ENCODE measurements at regions of chr10 and their contacts with region 1.

Region 1: DNA sequence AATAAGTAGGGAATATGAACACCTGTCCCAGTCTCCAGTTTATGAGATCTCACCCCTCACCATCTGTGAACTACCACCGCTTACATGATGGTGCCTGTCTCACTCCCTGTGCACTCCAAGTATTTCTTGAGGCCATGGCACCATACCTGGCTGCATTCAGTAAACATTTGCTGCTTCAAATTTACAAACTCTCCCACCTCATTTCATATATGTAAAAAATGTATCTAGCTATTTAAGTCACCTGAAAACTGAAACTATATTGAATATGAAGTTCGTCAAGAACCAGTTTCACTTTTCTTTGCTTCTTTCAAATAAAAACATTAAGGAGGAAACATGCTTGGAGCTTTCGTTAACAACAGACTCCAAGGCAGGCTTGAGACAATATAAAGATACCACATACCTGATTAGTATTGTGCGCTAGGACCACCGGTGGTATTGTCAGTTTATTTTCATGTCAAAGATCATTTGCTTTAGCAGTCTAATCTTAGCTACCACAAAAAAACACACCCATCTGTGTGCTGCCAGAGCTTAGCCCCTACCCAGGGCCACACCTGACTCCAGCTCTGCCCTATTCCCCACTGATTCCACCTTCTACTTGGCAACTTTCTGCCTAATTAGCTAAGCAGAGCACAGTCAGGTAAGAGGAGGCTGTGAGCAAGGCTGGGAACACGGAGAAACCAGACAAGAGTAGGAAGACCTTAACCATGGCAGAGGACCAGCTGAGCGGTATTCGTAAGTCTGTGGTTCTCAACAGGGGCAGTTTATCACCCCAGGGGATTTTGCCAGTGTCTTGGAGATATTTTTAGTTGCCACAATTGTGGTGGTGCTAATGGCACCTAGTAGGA is 92.0 kb downstream of the ZFAND4 start:
- DNase-seq: peak; percentile 23
- H3K4me3 ChIP-seq: peak overlapping the region; percentile 68
- H3K27ac ChIP-seq: peak overlapping the region; percentile 68
- H3K4me1 ChIP-seq: peaks cover 22% of the 10 kb centered on the region
- CTCF ChIP-seq: no peak

Region 2: DNA sequence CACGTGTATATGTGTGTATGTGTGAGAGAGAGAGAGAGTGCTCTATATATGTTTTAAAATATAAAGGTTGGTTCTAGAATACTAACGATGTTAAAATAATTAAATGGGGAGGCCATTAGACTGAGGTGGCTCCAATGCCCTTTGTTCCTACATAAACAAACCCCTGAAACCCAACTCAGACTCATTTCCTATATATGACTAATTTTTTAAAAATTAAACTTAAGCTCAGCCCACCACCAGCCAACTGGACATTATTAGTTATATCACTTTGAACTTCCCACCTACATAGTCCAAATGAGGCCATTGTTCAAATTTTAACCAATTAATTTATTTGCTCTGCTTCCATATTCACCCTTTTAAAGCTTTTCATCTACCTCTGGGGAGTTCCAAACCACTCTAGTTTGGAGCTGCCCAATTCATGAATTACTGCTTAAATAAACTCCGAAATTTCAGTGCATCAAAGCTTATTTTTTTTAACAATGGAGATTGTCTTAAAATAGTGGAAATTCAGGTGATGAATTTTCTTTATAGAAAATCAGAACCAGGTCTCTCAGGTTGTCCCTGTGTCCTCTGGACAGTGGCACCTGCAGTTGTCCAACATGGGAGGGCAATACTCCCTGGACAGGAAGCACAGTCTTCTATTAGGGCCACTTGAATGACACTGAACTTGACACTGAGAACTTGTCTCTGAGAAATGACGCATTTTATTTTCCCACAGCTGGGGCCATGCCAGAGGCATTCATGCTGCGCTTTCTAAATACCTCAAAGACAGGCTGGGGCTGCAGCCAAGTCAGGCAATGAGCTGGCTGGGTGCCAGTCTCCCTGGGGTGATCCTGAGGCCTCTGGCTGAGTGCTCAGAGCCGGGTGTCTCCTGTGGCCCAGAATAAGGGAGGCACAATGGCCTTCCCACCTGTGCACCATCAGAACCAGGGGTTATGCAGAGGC is 778.9 kb before region 1 on chr10:
- CTCF ChIA-PET with region 1: no interaction called
- POLR2A ChIA-PET with region 1: no interaction called
- intact Hi-C with region 1: no loop called
- DNase-seq: no peak
- H3K4me3 ChIP-seq: no peak overlapping the region
- H3K27ac ChIP-seq: no peak overlapping the region
- H3K4me1 ChIP-seq: no peaks in the 10 kb centered on the region
- CTCF ChIP-seq: no peak

Region 3: GRCh38 chr10:45561952-45562351 is 18.6 kb before region 1 on chr10:
- CTCF ChIA-PET with region 1: no interaction called
- POLR2A ChIA-PET with region 1: interaction called, 11 read pairs
- intact Hi-C with region 1: no loop called
- DNase-seq: no peak
- H3K4me3 ChIP-seq: no peak overlapping the region
- H3K27ac ChIP-seq: no peak overlapping the region
- H3K4me1 ChIP-seq: peaks cover 12% of the 10 kb centered on the region
- CTCF ChIP-seq: no peak